ENCODE measurements at regions of chr10 and their contacts with region 1.

Region 1: DNA sequence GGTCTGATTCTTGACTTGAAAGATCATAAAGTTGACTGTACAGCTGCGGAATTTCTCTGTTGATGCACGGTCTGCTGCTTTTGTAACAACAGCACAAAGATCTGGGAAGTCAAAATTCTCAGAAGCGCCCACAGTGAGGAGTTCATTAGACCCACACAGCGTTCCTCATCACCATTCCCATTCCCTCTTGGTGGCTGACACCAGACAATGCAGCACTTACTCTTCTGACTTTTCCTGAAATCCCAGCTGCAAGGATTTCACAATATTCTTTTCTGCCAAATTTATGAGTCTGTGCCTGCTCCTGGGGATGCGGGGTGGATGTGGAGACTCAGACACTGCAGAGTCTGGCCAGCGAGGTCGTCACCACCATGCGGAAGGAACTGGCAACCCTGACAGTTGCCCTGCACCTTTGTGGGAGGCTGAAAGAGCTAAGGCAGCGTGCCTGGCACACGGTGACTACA is 233.9 kb downstream of the FANK1 start:
- DNase-seq: no peak
- H3K4me3 ChIP-seq: no peak overlapping the region
- H3K27ac ChIP-seq: no peak overlapping the region
- H3K4me1 ChIP-seq: no peaks in the 10 kb centered on the region
- H3K27me3 ChIP-seq: no peaks in the 10 kb centered on the region
- CTCF ChIP-seq: no peak
- EP300 ChIP-seq: no peak
- POLR2A ChIP-seq: no peak

Region 2: DNA sequence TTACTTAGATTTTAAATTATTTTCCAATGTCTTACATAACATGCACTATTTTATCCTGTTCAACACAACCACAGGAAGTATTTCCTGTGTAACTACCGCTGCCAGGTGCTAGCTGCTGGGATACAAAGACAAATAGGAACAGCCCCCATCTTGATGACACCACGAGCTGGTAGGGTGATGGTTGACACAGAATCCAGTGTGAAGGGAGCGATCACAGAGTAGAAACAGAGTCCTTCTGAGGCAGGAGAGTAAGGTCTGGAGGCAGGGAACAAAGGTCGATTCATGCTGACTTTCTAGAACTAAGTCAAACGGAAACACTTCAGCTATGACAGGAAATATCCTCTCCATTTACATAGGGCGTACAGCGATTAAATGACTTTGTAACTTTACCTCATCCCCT is 25.7 kb after region 1 on chr10:
- intact Hi-C with region 1: loop called (anchors 2 kb)
- DNase-seq: no peak
- H3K4me3 ChIP-seq: no peak overlapping the region
- H3K27ac ChIP-seq: no peak overlapping the region
- H3K4me1 ChIP-seq: no peaks in the 10 kb centered on the region
- H3K27me3 ChIP-seq: no peaks in the 10 kb centered on the region
- CTCF ChIP-seq: no peak
- EP300 ChIP-seq: no peak
- POLR2A ChIP-seq: no peak

Region 3: DNA sequence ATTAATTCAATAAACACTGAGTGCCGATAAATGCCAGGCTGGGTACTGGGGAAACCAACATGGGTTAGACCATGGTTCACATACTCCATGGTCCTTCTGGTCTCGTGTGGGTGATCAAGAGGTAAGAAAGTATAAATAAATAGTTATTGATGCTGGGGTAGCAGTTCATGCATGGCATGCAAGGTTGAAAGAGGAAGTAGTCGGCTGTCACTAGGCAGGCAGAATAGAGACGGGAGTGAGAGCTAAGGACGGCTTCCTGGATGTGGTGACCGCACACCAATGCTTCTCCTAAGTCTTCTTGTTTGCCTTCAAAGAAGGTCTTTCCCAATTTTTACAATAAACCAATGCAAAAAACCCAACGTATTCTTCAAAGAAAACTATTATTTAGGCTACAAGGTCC is 49.3 kb after region 1 on chr10:
- intact Hi-C with region 1: no loop called
- DNase-seq: no peak
- H3K4me3 ChIP-seq: no peak overlapping the region
- H3K27ac ChIP-seq: no peak overlapping the region
- H3K4me1 ChIP-seq: no peaks in the 10 kb centered on the region
- H3K27me3 ChIP-seq: no peaks in the 10 kb centered on the region
- CTCF ChIP-seq: no peak
- EP300 ChIP-seq: no peak
- POLR2A ChIP-seq: no peak

Measured in sigmoid colon (tissue), 7 donors.